Activated CD8-positive, alpha-beta T cell treated with anti-CD3 and anti-CD28 coated beads, Interleukin-2, amount 10 ng/mL, durations not matched to agents 7 days and 5 days (primary cell): ENCODE measurements at regions of chr6 and their contacts with region 1.

Region 1: GRCh38 chr6:137707590-137708360 is 159.3 kb upstream of the TNFAIP3 start:
- DNase-seq: peak; percentile 88
- ATAC-seq: peak; percentile 82
- H3K4me3 Mint-ChIP-seq: peak overlapping the region; percentile 62
- H3K27ac Mint-ChIP-seq: peak overlapping the region; percentile 89
- H3K4me1 Mint-ChIP-seq: peaks cover 62% of the 10 kb centered on the region
- H3K27me3 Mint-ChIP-seq: no peaks in the 10 kb centered on the region

Region 2: GRCh38 chr6:135870722-135871121 is 1837.1 kb before region 1 on chr6:
- CTCF ChIA-PET with region 1: no interaction called
- POLR2A ChIA-PET with region 1: no interaction called
- DNase-seq: no peak
- ATAC-seq: no peak
- H3K4me3 Mint-ChIP-seq: no peak overlapping the region
- H3K27ac Mint-ChIP-seq: no peak overlapping the region
- H3K4me1 Mint-ChIP-seq: peaks cover 3% of the 10 kb centered on the region
- H3K27me3 Mint-ChIP-seq: peaks cover 2% of the 10 kb centered on the region

Region 3: GRCh38 chr6:137761103-137761886 is 53.5 kb after region 1 on chr6:
- CTCF ChIA-PET with region 1: interaction called, 10 read pairs
- POLR2A ChIA-PET with region 1: no interaction called
- DNase-seq: no peak
- ATAC-seq: no peak
- H3K4me3 Mint-ChIP-seq: no peak overlapping the region
- H3K27ac Mint-ChIP-seq: no peak overlapping the region
- H3K4me1 Mint-ChIP-seq: no peaks in the 10 kb centered on the region
- H3K27me3 Mint-ChIP-seq: no peaks in the 10 kb centered on the region

Region 4: GRCh38 chr6:137811121-137811915 is 103.5 kb after region 1 on chr6:
- CTCF ChIA-PET with region 1: interaction called, 21 read pairs
- POLR2A ChIA-PET with region 1: interaction called, 5 read pairs
- DNase-seq: peak; percentile 84
- ATAC-seq: peak; percentile 95
- H3K4me3 Mint-ChIP-seq: peak overlapping the region; percentile 35
- H3K27ac Mint-ChIP-seq: peak overlapping the region; percentile 72
- H3K4me1 Mint-ChIP-seq: peaks cover 42% of the 10 kb centered on the region
- H3K27me3 Mint-ChIP-seq: no peaks in the 10 kb centered on the region

Region 5: GRCh38 chr6:137873273-137873762 is 165.5 kb after region 1 on chr6:
- CTCF ChIA-PET with region 1: interaction called, 186 read pairs
- POLR2A ChIA-PET with region 1: interaction called, 35 read pairs
- DNase-seq: peak; percentile 44
- ATAC-seq: no peak
- H3K4me3 Mint-ChIP-seq: peak overlapping the region; percentile 94
- H3K27ac Mint-ChIP-seq: peak overlapping the region; percentile 42
- H3K4me1 Mint-ChIP-seq: peaks cover 83% of the 10 kb centered on the region
- H3K27me3 Mint-ChIP-seq: no peaks in the 10 kb centered on the region

Region 6: DNA sequence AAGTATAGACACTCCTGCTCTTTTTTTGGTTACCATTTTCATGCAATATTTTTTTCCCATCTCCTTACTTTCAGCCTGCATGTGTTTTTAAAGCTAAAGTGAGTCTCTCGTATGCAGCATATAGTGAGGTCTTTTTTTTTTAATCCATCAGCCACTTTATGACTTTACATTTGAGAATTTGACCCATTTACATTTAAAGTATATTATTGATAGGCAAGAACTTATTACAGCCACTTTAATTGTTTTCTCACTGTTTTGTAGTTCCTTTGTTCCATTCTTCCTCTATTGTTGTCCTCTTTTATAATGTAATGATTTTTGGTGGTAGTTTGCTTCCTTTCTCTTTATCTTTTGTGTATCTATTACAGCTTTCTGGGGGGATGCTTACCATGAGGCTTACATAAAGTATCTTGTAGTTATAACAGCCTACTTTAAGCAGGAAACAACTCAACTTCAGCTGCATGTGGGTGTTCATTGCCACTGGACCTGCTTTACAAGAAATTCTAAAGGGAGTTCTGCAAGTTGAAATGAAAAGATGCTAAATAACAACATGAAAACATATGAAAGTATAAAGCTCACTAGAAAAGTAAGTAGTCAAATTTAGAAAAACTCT is 231.1 kb after region 1 on chr6:
- CTCF ChIA-PET with region 1: interaction called, 58 read pairs
- POLR2A ChIA-PET with region 1: no interaction called
- DNase-seq: no peak
- ATAC-seq: no peak
- H3K4me3 Mint-ChIP-seq: no peak overlapping the region
- H3K27ac Mint-ChIP-seq: no peak overlapping the region
- H3K4me1 Mint-ChIP-seq: peaks cover 18% of the 10 kb centered on the region
- H3K27me3 Mint-ChIP-seq: no peaks in the 10 kb centered on the region

Region 7: DNA sequence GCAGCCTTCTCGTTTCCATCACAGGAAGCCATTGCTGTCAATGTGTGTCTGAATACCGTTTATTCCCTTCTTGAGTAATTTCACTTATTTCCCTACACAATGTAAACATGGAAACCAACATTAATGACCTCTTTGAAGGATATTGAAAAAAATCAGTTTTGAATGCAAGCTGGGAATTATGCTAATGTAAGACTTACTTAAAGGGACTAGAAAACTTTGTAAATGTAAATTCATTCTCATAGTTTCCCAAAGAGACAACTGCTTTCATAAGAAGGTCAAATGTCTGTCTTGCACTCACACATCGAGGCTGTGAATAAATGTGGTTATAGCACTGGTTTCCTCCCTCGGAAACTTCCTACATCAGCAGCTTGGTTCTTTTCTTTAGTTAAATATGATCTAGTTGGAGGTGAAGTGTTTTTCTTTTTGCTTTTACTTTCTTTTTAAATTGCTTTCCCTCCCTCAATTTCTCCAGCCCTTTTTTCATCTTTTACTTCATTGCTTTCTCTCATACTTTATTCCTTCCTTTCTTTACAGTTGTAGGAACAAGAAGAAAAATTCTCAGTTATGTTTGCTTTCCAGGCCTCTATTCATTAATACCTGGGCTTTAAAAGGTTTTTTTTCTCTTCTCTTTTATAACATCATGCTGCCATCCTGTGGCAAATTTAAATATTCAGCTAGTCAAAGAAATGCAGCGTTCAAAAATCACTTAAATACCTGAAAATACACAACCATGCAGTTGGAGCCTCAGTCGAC is 267.6 kb after region 1 on chr6:
- CTCF ChIA-PET with region 1: interaction called, 52 read pairs
- POLR2A ChIA-PET with region 1: interaction called, 3 read pairs
- DNase-seq: peak; percentile 59
- ATAC-seq: peak; percentile 86
- H3K4me3 Mint-ChIP-seq: peak overlapping the region; percentile 76
- H3K27ac Mint-ChIP-seq: peak overlapping the region; percentile 92
- H3K4me1 Mint-ChIP-seq: peaks cover 51% of the 10 kb centered on the region
- H3K27me3 Mint-ChIP-seq: no peaks in the 10 kb centered on the region